ENCODE measurements at regions of chr19 and their contacts with region 1.

Region 1: GRCh38 chr19:38634757-38635482 is 12.5 kb upstream of the ACTN4 start:
- DNase-seq: peak; percentile 84
- ATAC-seq: no peak
- H3K4me3 Mint-ChIP-seq: no peak overlapping the region
- H3K27ac Mint-ChIP-seq: peak overlapping the region; percentile 90
- H3K4me1 Mint-ChIP-seq: peaks cover 28% of the 10 kb centered on the region
- H3K27me3 Mint-ChIP-seq: no peaks in the 10 kb centered on the region

Region 2: GRCh38 chr19:38544034-38544958 is 90.6 kb before region 1 on chr19:
- CTCF ChIA-PET with region 1: interaction called, 32 read pairs
- POLR2A ChIA-PET with region 1: no interaction called
- intact Hi-C with region 1: loop called (anchors 1 kb)
- DNase-seq: peak; percentile 72
- ATAC-seq: peak; percentile 89
- H3K4me3 Mint-ChIP-seq: peak overlapping the region; percentile 63
- H3K27ac Mint-ChIP-seq: peak overlapping the region; percentile 61
- H3K4me1 Mint-ChIP-seq: peaks cover 24% of the 10 kb centered on the region
- H3K27me3 Mint-ChIP-seq: no peaks in the 10 kb centered on the region

Region 3: GRCh38 chr19:38766276-38767047 is 131.5 kb after region 1 on chr19:
- CTCF ChIA-PET with region 1: no interaction called
- POLR2A ChIA-PET with region 1: no interaction called
- intact Hi-C with region 1: no loop called
- DNase-seq: no peak
- ATAC-seq: no peak
- H3K4me3 Mint-ChIP-seq: no peak overlapping the region
- H3K27ac Mint-ChIP-seq: no peak overlapping the region
- H3K4me1 Mint-ChIP-seq: peaks cover 9% of the 10 kb centered on the region
- H3K27me3 Mint-ChIP-seq: no peaks in the 10 kb centered on the region

Region 4: DNA sequence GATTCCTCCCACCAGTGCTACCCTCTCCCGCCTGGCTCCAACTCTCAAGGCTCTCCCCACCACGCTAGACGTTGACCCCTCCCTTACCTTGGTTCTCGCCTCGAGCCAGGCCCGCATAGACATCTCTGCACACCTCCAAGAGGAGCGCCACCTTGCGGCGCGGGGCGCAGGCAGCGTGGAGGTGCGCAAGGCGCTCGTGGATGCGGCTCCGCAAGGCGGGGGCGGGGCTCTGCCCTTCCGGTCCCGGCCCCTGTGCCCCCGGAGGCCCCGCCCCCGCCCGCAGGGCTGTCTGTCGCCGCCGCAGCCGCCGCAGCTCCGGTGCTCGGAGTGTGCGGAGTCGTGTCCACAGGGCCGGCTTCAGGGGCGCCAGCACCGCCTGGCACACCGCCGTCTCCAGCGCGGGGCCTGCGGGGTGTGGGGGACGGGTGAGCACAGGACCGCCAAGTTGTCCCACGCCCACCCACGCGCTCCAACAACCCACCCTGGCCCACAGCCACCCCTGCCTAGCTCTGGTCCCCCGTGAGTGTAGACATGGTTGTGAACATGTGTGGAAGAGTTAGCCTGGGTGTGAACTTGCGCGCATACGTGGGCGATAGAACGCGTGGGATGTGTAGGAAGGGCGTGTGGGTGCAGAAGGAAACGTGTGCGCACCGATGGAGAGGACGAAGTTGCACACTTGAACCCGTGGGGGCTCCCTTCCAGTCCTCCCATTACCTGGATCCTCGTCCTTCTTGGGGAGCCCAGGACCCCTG is 235.1 kb after region 1 on chr19:
- CTCF ChIA-PET with region 1: no interaction called
- POLR2A ChIA-PET with region 1: interaction called, 10 read pairs
- intact Hi-C with region 1: no loop called
- DNase-seq: peak; percentile 94
- ATAC-seq: peak; percentile 85
- H3K4me3 Mint-ChIP-seq: peak overlapping the region; percentile 76
- H3K27ac Mint-ChIP-seq: peak overlapping the region; percentile 86
- H3K4me1 Mint-ChIP-seq: peaks cover 37% of the 10 kb centered on the region
- H3K27me3 Mint-ChIP-seq: no peaks in the 10 kb centered on the region

Region 5: DNA sequence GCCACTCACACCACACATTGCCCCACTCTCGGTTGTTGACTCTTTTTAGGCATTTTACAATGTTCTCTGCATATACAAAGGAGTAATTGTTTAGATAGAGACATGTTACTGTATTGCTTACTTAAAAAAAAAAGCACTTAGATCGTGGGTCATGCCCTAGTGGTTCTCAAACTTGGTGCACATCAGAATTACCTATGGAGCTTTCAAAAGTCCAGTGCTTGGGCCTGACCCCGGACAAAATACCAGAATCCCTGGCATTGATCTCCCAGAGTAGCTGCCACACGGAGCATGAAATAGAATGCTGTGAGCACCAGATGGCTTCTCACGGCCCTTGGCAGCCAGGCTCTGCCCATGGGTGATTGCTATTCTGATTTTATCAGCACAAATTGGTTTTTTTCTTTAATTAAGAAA is 469.3 kb after region 1 on chr19:
- CTCF ChIA-PET with region 1: no interaction called
- POLR2A ChIA-PET with region 1: no interaction called
- intact Hi-C with region 1: no loop called
- DNase-seq: no peak
- ATAC-seq: no peak
- H3K4me3 Mint-ChIP-seq: no peak overlapping the region
- H3K27ac Mint-ChIP-seq: no peak overlapping the region
- H3K4me1 Mint-ChIP-seq: no peaks in the 10 kb centered on the region
- H3K27me3 Mint-ChIP-seq: peaks cover 5% of the 10 kb centered on the region